ENCODE measurements at regions of chr3 and their contacts with region 1.

Region 1: GRCh38 chr3:27712136-27713077 is 9.7 kb downstream of the EOMES start:
- DNase-seq: peak; percentile 78
- ATAC-seq: peak; percentile 68
- H3K4me3 Mint-ChIP-seq: peak overlapping the region; percentile 82
- H3K27ac Mint-ChIP-seq: no peak overlapping the region
- H3K4me1 Mint-ChIP-seq: peaks cover 48% of the 10 kb centered on the region
- H3K27me3 Mint-ChIP-seq: peaks cover 84% of the 10 kb centered on the region
- CTCF ChIP-seq: peak; percentile 62

Region 2: DNA sequence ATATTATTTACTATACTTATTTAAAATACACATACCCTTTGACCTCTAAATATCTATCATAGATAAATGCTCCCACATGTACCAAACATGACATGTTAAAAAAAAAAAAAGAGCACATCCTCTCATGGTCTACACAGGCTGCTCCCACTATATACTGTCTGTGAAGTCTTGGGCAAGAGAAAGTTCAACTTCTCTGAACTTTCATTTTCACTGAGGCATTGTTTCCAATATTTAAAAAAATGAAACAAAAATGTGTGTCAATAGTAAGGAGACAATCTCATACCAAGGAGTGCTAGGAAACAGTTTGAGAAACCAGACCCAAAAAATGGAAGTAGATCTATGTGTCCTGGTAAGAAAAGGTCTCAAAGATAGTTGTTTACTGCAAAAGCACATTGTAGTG is 257.5 kb before region 1 on chr3:
- CTCF ChIA-PET with region 1: no interaction called
- POLR2A ChIA-PET with region 1: no interaction called
- DNase-seq: no peak
- ATAC-seq: no peak
- H3K4me3 Mint-ChIP-seq: no peak overlapping the region
- H3K27ac Mint-ChIP-seq: 0 out of 2 replicates have a peak overlapping the region, but pooled peaks have one; percentile 21
- H3K4me1 Mint-ChIP-seq: peaks cover 51% of the 10 kb centered on the region
- H3K27me3 Mint-ChIP-seq: no peaks in the 10 kb centered on the region
- CTCF ChIP-seq: no peak

Region 3: DNA sequence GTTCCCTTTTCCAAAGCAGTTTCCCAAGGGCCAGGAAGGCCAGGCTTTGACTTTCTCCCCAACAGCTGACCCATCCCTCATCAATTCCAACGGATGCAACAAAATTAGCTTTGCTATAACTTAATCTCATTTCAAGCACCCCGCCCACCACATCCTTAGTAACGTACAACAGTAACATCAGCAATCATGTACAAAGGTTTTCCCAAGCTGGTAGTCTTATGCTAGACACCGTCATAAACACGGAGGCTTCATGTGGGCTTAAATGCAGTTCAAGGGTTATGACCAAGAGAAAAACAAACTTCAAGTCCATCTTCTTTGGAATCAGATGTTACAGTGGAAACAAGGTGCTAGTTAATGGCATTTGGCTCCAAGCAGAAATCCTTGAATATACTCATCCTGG is 56.9 kb before region 1 on chr3:
- CTCF ChIA-PET with region 1: no interaction called
- POLR2A ChIA-PET with region 1: no interaction called
- DNase-seq: no peak
- ATAC-seq: no peak
- H3K4me3 Mint-ChIP-seq: no peak overlapping the region
- H3K27ac Mint-ChIP-seq: no peak overlapping the region
- H3K4me1 Mint-ChIP-seq: peaks cover 42% of the 10 kb centered on the region
- H3K27me3 Mint-ChIP-seq: no peaks in the 10 kb centered on the region
- CTCF ChIP-seq: no peak

Region 4: DNA sequence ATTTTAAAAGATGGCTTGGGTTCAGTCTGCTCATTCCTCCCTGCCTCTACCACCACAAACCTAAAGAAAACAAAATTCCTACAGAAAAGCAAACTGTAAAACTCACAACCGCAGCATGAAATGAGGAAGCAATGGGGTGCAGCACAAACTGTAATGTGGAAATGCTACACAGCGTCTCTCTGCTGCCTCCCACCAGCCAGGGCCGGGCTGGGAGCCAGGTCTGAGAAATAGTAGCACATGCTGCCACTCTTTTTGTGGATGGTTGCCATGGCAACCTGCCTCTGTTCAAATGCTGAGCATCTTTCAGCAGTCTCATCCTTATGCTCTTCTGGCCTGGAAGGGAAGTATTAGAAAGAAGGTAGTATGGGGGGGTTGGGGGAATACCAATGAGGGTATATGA is 45.7 kb before region 1 on chr3:
- CTCF ChIA-PET with region 1: interaction called, 6 read pairs
- POLR2A ChIA-PET with region 1: interaction called, 11 read pairs
- DNase-seq: peak; percentile 81
- ATAC-seq: peak; percentile 90
- H3K4me3 Mint-ChIP-seq: peak overlapping the region; percentile 55
- H3K27ac Mint-ChIP-seq: peak overlapping the region; percentile 98
- H3K4me1 Mint-ChIP-seq: peaks cover 42% of the 10 kb centered on the region
- H3K27me3 Mint-ChIP-seq: no peaks in the 10 kb centered on the region
- CTCF ChIP-seq: no peak

Region 5: DNA sequence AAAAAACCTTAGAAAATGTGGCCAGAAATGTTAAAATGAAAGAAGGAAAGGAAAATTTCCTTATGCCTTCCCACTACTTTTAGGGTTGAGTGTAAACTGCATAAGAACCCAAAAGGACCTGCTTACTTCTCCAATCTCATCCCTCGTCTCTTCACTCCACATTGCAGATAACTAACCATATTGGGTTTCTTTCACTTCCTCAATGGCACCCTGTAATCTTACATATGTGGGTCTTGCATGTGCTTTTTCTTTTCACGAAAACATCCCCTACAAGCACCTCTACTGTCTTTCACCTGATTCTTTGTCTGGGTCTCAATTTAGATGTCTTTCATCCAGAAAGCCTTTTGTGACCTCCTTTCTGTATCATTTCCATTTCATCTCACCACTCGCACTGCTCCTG is 13.3 kb before region 1 on chr3:
- CTCF ChIA-PET with region 1: interaction called, 10 read pairs
- POLR2A ChIA-PET with region 1: no interaction called
- DNase-seq: no peak
- ATAC-seq: no peak
- H3K4me3 Mint-ChIP-seq: no peak overlapping the region
- H3K27ac Mint-ChIP-seq: no peak overlapping the region
- H3K4me1 Mint-ChIP-seq: no peaks in the 10 kb centered on the region
- H3K27me3 Mint-ChIP-seq: no peaks in the 10 kb centered on the region
- CTCF ChIP-seq: no peak

Region 6: GRCh38 chr3:27827041-27827440 is 114.6 kb after region 1 on chr3:
- CTCF ChIA-PET with region 1: interaction called, 14 read pairs
- POLR2A ChIA-PET with region 1: no interaction called
- DNase-seq: no peak
- ATAC-seq: peak; percentile 74
- H3K4me3 Mint-ChIP-seq: no peak overlapping the region
- H3K27ac Mint-ChIP-seq: no peak overlapping the region
- H3K4me1 Mint-ChIP-seq: peaks cover 10% of the 10 kb centered on the region
- H3K27me3 Mint-ChIP-seq: peaks cover 30% of the 10 kb centered on the region
- CTCF ChIP-seq: no peak

Region 7: GRCh38 chr3:27905625-27906024 is 193.2 kb after region 1 on chr3:
- CTCF ChIA-PET with region 1: interaction called, 13 read pairs
- POLR2A ChIA-PET with region 1: no interaction called
- DNase-seq: no peak
- ATAC-seq: peak; percentile 89
- H3K4me3 Mint-ChIP-seq: no peak overlapping the region
- H3K27ac Mint-ChIP-seq: no peak overlapping the region
- H3K4me1 Mint-ChIP-seq: peaks cover 22% of the 10 kb centered on the region
- H3K27me3 Mint-ChIP-seq: no peaks in the 10 kb centered on the region
- CTCF ChIP-seq: no peak

Region 8: DNA sequence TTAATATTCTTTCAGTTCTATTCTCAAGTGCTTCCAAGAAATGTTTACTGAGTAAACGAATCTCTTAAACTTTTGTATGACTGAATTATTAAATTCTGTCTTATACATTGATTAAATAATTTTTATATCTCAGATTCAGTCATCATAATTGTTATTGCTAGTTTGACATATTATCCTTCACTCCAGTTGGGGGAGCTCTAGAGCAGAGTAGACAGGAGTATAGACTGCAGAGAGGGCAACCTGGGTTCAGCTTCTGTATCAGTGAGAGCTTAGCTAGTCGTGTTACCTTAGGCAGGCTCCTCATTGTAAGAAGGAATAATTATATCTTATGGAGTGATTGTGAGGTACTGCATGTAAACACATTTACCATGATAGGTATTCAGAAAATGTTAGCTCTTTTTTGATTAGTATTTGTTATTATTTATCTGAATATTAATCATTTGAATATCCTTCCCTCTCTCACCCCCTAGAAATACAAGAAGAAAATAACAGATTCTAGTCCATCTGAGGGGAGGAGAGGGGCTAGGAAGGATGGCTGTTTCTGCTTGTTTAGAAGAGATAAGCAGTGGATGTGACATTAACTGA is 605.1 kb after region 1 on chr3:
- CTCF ChIA-PET with region 1: interaction called, 19 read pairs
- POLR2A ChIA-PET with region 1: no interaction called
- DNase-seq: no peak
- ATAC-seq: peak; percentile 95
- H3K4me3 Mint-ChIP-seq: no peak overlapping the region
- H3K27ac Mint-ChIP-seq: no peak overlapping the region
- H3K4me1 Mint-ChIP-seq: peaks cover 9% of the 10 kb centered on the region
- H3K27me3 Mint-ChIP-seq: no peaks in the 10 kb centered on the region
- CTCF ChIP-seq: no peak